ENCODE measurements at regions of chr1 and their contacts with region 1.

Region 1: DNA sequence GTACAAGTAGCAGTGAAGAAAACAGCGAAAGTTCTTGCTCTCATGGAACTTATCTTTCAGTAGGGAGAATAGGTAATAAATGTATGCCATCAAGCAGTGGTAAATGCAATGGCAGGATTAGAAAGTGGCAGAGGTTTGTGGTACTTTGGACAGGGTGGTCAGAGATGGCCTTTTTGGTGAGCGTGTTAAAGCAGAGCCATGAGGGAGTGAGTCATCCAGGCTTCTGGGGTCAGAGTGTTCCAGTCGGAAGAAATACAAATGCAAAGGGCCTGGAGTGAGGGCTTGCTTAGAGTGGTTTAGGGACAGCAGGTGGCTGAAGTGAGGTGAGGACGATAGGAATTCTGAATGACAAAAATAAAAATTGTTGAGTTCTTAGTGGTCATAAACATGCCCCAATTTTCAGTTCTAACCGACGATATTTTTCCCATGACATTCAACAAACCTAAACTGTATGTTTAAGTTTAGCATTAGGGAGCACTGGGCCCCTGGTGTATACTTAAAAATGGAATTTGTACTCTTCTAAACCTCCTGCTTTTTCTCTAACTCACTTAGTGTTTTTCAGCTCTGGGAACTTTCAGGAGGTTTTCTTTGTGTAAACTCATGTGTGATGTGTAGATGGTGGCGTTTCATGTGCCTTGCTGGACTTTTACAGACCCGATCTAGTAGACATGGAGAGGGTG is 78.2 kb downstream of the MACF1 start:
- DNase-seq: no peak
- ATAC-seq: no peak
- H3K4me3 ChIP-seq: no peak overlapping the region
- H3K27ac ChIP-seq: no peak overlapping the region
- H3K4me1 ChIP-seq: no peaks in the 10 kb centered on the region
- H3K27me3 ChIP-seq: no peaks in the 10 kb centered on the region
- CTCF ChIP-seq: no peak

Region 2: GRCh38 chr1:38898653-38899230 is 383.9 kb before region 1 on chr1:
- CTCF ChIA-PET with region 1: no interaction called
- POLR2A ChIA-PET with region 1: interaction called, 13 read pairs
- in situ Hi-C with region 1: no loop called
- intact Hi-C with region 1: no loop called
- DNase-seq: no peak
- ATAC-seq: no peak
- H3K4me3 ChIP-seq: no peak overlapping the region
- H3K27ac ChIP-seq: no peak overlapping the region
- H3K4me1 ChIP-seq: no peaks in the 10 kb centered on the region
- H3K27me3 ChIP-seq: no peaks in the 10 kb centered on the region
- CTCF ChIP-seq: no peak

Measured in Panc1 (cell line).